Mucosa of descending colon (tissue), 3 donors: ENCODE measurements at regions of chr2 and their contacts with region 1.

Region 1: GRCh38 chr2:190511104-190511503 is 23.4 kb downstream of the NEMP2 start:
- DNase-seq: no peak
- ATAC-seq: no peak
- H3K4me3 ChIP-seq: no peak overlapping the region
- H3K4me1 ChIP-seq: peaks cover 27% of the 10 kb centered on the region
- CTCF ChIP-seq: no peak

Region 2: DNA sequence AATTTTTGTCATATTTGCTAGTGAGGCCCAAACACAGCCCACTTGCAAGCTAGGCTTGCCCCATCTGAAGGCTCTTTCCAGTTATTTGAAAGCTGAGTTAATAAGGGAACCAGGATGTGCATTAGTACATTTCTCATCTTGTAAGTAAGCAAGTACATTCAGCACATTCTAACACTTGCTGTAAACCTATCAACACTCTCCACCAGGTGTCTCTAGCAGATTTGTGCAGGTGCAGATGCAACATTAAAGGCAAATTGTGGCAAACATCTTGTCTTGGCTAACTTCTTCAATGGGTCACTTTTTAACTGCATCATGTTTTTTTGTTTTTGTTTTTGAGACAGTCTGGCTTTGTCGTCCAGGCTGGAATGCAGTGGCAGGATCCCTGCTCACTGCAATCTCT is 128.3 kb before region 1 on chr2:
- intact Hi-C with region 1: loop called in 1 of 2 experiments (anchors 5 kb)
- DNase-seq: peak in 1 of 3 donors; percentile 76
- ATAC-seq: peak; percentile 89
- H3K4me3 ChIP-seq: no peak overlapping the region
- H3K4me1 ChIP-seq: peaks cover 3% of the 10 kb centered on the region
- CTCF ChIP-seq: no peak

Region 3: DNA sequence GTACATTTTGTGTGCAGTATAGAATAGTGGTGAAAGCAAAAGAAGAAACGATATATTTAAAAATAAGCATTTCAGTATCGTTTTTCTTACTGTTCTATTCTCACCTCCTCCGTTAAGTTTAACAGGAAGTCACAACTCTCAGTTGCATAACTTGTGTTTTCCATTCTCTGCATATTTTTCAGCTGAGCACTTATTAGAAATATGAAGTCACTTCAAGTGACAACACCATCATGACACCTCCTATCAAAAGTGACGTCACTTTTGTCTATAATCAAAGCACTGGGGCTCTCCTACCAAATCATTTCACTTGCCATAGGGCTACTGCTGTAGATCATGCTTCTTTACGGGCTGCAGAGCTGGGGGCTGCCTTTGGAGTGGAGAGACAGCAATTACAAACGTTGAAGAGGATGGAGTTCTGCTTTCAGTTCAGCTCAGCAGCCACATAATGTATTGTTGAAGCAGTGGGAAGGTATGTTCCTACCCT is 603.3 kb after region 1 on chr2:
- intact Hi-C with region 1: no loop called
- DNase-seq: no peak
- ATAC-seq: peak; percentile 55
- H3K4me3 ChIP-seq: no peak overlapping the region
- H3K4me1 ChIP-seq: peaks cover 3% of the 10 kb centered on the region
- CTCF ChIP-seq: no peak